Mammary epithelial cell (primary cell): ENCODE measurements at regions of chr11 and their contacts with region 1.

Region 1: GRCh38 chr11:118051611-118052461 is 25.0 kb upstream of the TMPRSS4 start:
- DNase-seq: no peak
- H3K4me3 ChIP-seq: no peak overlapping the region
- H3K27ac ChIP-seq: no peak overlapping the region
- H3K4me1 ChIP-seq: no peaks in the 10 kb centered on the region
- H3K27me3 ChIP-seq: no peaks in the 10 kb centered on the region
- CTCF ChIP-seq: no peak

Region 2: GRCh38 chr11:117817368-117818040 is 234.3 kb before region 1 on chr11:
- CTCF ChIA-PET with region 1: no interaction called
- dilution Hi-C with region 1: no loop called
- in situ Hi-C with region 1: no loop called
- intact Hi-C with region 1: loop called (anchors 1 kb)
- DNase-seq: peak; percentile 63
- H3K4me3 ChIP-seq: no peak overlapping the region
- H3K27ac ChIP-seq: no peak overlapping the region
- H3K4me1 ChIP-seq: peaks cover 10% of the 10 kb centered on the region
- H3K27me3 ChIP-seq: no peaks in the 10 kb centered on the region
- CTCF ChIP-seq: peak; percentile 99 to 100

Region 3: DNA sequence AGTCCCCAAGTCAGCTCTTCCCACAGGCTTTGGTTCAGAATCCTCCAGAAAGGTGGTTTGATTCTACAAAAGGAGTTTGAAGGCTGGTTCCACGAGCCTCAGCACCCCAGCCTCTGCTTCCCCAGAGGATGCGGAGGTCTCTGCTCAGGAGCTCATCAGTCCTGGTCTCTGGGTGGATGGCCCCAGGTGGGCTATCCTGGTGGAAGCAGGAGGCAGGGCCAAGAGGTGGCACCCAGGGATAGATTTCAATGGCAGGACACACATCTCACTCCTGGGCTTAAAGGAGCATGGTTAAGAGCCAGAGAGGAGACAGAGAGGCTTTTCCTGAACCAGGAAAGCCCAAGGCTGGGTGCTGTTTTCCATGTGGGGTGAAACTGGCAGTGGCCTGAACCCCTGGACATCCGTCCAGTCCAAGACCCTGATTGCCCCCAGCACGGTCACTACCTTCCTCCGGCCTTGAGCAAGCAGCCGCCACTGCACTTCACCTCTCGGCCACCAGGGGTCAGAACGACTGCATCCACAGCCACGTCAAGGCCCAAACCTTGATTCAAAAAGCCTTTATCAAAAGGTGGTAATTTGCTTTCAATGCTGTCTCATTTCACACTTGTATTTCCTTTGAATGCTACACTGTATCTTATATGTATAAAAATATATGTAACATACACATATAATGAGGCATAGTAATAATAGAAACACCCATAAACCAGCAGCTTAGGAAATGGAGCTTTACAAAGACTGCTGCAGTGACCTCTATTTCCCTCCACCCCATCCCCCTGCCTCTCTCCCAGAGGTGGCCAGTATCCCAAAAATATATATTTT is 208.0 kb before region 1 on chr11:
- CTCF ChIA-PET with region 1: no interaction called
- dilution Hi-C with region 1: no loop called
- in situ Hi-C with region 1: loop called (anchors 10 kb)
- intact Hi-C with region 1: loop called (anchors 1 kb)
- DNase-seq: peak; percentile 24
- H3K4me3 ChIP-seq: no peak overlapping the region
- H3K27ac ChIP-seq: no peak overlapping the region
- H3K4me1 ChIP-seq: no peaks in the 10 kb centered on the region
- H3K27me3 ChIP-seq: no peaks in the 10 kb centered on the region
- CTCF ChIP-seq: peak; percentile 94 to 98

Region 4: DNA sequence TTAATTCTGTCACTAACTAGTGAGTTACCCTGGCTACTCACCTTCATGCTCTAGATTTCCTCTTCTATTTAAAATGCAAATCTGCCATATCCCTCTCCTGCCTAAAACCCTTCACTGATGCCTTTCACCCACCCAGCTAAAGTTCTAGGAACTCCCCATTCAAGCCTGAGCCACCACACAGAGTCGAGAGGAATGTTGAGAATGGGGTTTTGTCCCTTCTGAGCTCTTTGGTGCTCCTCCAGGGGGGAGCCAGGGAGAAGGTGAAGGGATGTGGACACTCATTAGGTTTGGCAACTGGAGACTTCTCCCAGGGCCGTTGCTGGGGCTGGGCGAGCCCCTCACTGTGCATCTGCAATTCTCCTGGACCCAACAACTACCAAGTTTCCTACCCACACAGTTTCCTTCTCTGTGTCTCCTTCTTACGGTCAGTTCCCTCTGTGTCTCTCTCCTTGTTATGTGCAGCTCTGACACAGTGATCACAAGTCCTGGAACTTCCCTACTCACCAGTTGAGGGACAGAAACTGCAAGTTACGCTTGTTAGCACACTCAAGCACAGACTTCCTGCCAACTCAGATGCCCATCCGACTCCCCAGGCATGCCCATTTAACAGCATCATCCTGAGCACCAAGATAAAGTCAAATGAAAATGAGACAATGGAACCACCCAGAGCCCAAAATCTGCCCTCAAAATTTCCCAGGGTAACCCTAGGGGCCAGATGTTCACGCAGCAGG is 72.2 kb before region 1 on chr11:
- CTCF ChIA-PET with region 1: no interaction called
- dilution Hi-C with region 1: loop called (anchors 5 kb)
- in situ Hi-C with region 1: no loop called
- intact Hi-C with region 1: no loop called
- DNase-seq: no peak
- H3K4me3 ChIP-seq: no peak overlapping the region
- H3K27ac ChIP-seq: no peak overlapping the region
- H3K4me1 ChIP-seq: no peaks in the 10 kb centered on the region
- H3K27me3 ChIP-seq: no peaks in the 10 kb centered on the region
- CTCF ChIP-seq: no peak